IMR-90 (cell line): ENCODE measurements at regions of chr19 and their contacts with region 1.

Region 1: DNA sequence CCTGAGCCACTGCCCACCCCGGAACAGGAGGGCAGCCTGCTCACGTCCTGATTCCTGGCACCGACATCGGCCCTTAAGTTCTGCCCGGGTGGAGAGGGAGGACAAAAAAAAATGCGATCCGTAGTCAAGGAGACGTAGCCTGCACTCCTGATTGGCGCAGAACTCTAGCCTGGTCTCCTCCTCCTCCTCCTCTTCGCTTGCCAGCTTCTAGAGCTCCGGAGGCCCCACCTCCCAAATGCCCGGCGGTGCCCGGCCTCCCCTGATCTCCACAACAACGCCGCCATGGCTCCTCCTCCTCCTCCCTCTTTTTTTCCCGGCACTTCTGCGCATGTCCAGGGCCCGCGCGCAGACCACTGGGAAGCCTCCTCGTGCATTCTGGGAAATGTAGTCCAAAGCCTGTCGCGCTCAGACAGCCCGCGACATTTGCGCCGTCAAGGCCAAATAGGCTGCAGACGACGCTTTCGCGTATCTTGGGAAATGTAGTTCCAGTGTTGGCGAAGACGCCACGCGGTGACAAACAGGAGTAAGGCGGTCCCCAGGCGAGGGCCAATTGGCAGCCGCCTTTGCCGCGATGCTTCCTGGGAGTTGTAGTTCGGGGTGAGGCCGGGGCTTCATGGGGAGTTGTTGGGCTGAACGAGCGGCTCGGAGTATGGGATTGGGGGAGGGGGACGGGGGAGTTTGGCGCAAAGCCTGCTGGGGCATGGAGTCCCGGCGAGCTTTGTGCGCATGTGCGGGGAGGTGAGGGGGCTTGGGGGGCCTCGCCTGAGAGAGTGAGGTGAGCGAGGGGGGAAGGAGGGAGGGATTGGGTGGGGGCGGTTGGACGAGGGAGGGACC is at the start of gene ZNF444:
- DNase-seq: peak; percentile 99
- ATAC-seq: peak; percentile 93
- H3K4me3 ChIP-seq: peak within 1 kb of the TSS; percentile 38
- H3K27ac ChIP-seq: peak within 1 kb of the TSS; percentile 73
- H3K4me1 ChIP-seq: no peaks in the 10 kb centered on the region; the same call in 1 of the 2 replicates
- H3K27me3 ChIP-seq: no peaks in the 10 kb centered on the region
- CTCF ChIP-seq: no peak
- POLR2A ChIP-seq: peak; percentile 63; the same call in 1 of the 2 replicates
- RAD21 ChIP-seq: no peak
- total RNA-seq, gene ZNF444: 2.5 and 3.3 TPM in 2 replicates

Region 2: DNA sequence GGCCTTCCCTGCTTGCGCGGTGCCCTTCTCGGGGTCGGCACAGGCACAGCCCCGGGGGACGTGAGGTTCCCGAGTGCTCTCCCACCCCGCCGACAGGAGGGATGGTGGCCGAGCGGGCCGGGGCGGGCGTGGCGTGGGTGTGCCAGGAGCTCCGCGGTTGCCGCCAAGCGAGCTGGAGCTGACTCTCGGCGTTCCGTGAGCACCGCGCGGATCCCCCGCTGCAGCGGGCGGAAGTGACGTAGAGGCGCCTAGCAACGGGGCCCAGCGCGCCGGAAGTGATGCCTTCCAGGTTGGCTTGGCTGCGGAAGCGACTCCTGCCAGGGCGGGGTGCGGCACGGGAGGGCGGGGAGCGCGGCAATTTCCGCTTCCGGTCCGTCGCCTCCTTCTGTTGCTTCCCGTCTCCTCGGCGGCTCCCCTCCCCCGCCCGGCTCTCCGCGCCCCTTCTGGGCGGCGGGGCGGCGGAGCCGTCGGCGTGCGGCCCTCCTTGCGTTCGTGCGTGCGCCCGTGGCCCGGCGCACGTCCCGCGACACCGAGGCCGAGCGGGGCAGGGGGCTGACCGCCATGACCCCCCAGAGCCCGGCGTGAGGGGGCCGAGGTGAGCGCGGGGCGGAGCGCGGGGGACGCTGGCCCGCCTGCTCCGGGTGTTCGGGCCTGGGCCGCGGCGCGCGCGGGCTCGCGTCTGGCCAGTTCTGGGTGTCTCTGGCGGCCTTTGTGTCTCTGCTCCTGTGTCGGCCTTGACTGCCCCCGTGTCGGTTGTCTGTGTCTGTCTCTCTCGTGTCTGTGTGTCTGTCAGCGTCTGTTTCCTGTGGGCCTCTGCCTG is 465.7 kb before region 1 on chr19 and contains the start of gene EPN1:
- CTCF ChIA-PET with region 1: no interaction called
- POLR2A ChIA-PET with region 1: no interaction called
- dilution Hi-C with region 1: no loop called
- in situ Hi-C with region 1: loop called (anchors 25 kb)
- intact Hi-C with region 1: no loop called
- DNase-seq: peak; percentile 96
- ATAC-seq: peak; percentile 87
- H3K4me3 ChIP-seq: peak within 1 kb of the TSS; percentile 80
- H3K27ac ChIP-seq: peak within 1 kb of the TSS; percentile 78
- H3K4me1 ChIP-seq: peaks cover 5% of the 10 kb centered on the region; the same call in 1 of the 2 replicates
- H3K27me3 ChIP-seq: no peaks in the 10 kb centered on the region
- CTCF ChIP-seq: no peak
- POLR2A ChIP-seq: peak; percentile 38; the same call in 1 of the 2 replicates
- RAD21 ChIP-seq: no peak
- total RNA-seq, gene EPN1: 19.0 and 21.9 TPM in 2 replicates

Region 3: GRCh38 chr19:55923556-55923955 is 217.2 kb before region 1 on chr19:
- CTCF ChIA-PET with region 1: no interaction called
- POLR2A ChIA-PET with region 1: no interaction called
- dilution Hi-C with region 1: no loop called
- in situ Hi-C with region 1: no loop called
- intact Hi-C with region 1: no loop called
- DNase-seq: no peak
- ATAC-seq: no peak
- H3K4me3 ChIP-seq: no peak overlapping the region
- H3K27ac ChIP-seq: no peak overlapping the region
- H3K4me1 ChIP-seq: no peaks in the 10 kb centered on the region
- H3K27me3 ChIP-seq: no peaks in the 10 kb centered on the region
- CTCF ChIP-seq: no peak
- POLR2A ChIP-seq: no peak
- RAD21 ChIP-seq: no peak

Region 4: DNA sequence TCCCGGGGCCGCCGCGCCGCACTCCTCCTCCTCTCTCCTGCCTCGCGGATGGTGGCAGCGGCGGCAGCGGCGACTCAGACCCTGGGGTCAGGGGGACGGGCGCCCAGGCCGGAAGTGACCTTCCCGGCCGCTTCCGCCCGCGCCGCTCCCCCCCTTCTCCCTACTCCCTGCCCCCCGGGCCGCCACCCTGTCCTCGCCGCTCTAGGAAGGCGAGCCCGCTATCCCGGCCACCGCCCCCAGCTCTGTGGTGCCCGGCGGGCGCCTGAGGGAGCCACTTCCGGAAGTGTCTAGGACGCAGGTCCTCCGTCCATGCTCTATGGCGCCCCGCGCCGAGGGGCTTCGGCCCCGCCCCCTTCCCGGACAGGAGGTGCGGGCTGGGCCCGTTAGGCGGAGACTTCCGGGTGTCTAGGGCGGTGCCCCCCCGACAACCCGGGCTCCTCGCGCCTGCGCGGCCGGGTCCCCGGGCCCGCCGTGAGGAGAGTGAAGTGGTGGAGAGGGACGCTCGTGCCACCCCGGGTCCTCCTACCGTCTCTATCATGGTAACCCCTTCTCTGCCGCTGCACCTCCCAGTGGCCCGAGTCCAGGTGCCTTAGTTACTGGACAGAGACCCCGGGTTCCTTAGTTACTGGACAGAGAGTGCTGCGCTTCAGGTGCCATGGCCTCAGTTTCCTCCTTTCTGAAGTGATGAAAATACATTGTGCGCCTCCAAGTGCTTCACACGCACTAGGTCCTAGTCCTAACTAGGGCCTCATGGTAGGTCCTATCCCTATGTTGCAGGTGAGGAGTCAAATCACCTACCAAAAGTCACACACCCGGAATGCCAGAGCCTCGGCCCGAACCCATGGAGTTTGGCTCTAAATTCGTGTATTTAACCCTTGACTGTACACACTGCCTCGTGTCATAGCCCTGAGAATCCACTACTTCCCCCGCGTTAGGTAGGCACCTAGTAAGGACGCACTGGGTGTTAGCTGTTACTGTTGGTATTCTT is 19.3 kb before region 1 on chr19 and contains the start of gene ZNF787:
- CTCF ChIA-PET with region 1: no interaction called
- POLR2A ChIA-PET with region 1: interaction called, 8 read pairs
- dilution Hi-C with region 1: no loop called
- in situ Hi-C with region 1: no loop called
- intact Hi-C with region 1: loop called (anchors 2 kb)
- DNase-seq: peak; percentile 96
- ATAC-seq: peak; percentile 85
- H3K4me3 ChIP-seq: peak within 1 kb of the TSS; percentile 89
- H3K27ac ChIP-seq: peak within 1 kb of the TSS; percentile 99
- H3K4me1 ChIP-seq: peaks cover 15% of the 10 kb centered on the region
- H3K27me3 ChIP-seq: no peaks in the 10 kb centered on the region
- CTCF ChIP-seq: 0 out of 2 replicates have a peak, but pooled peaks have one; percentile 1
- POLR2A ChIP-seq: peak; percentile 65
- RAD21 ChIP-seq: 0 out of 2 replicates have a peak, but pooled peaks have one; percentile 2
- total RNA-seq, gene ZNF787: 4.8 and 5.6 TPM in 2 replicates